ENCODE measurements at regions of chrX and their contacts with region 1.

Region 1: DNA sequence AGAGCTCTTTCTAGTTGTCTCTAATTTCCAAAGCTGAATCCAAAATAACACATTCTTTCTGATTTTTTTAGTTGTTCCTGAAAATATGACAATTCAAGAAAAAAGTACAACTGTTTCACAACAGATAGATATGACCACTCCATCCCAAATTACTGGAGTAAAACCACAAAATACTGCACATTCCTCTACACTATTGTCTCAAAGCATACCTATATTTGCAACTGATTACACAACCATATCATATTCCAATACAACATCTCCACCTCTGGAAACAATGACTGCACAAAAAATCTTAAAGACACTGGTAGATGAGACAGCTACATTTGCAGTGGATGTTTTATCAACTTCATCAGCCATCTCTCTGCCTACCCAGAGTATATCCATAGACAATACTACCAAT is 43.6 kb downstream of the ADGRG4 start:
- DNase-seq: peak in 1 of 2 experiments; percentile 78
- H3K4me3 ChIP-seq: no peak overlapping the region
- H3K27ac ChIP-seq: peak overlapping the region; percentile 25
- H3K4me1 ChIP-seq: peaks cover 21% of the 10 kb centered on the region
- H3K27me3 ChIP-seq: no peaks in the 10 kb centered on the region
- CTCF ChIP-seq: no peak

Region 2: DNA sequence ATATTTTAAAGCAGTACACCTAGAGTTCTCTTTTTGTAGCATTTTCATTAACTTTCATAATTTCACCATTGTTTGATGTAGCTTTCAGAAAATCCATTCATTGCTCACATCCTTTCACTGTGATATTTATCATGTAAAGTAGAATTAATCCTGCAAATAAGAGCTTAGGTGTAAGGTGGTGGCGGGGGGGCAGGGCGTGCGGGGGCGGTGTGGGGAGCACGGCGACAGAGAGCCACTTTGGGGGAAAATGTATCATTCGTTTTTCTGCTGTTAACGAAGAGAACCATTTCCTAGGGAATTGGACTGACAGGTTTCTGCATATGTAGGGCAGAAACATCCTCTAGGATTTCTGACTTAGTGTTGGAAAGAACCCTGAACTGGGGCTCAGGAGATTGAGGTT is 60.8 kb after region 1 on chrX:
- CTCF ChIA-PET with region 1: no interaction called
- POLR2A ChIA-PET with region 1: interaction called, 20 read pairs
- intact Hi-C with region 1: no loop called
- DNase-seq: no peak
- H3K4me3 ChIP-seq: no peak overlapping the region
- H3K27ac ChIP-seq: no peak overlapping the region
- H3K4me1 ChIP-seq: no peaks in the 10 kb centered on the region
- H3K27me3 ChIP-seq: no peaks in the 10 kb centered on the region
- CTCF ChIP-seq: no peak

Region 3: DNA sequence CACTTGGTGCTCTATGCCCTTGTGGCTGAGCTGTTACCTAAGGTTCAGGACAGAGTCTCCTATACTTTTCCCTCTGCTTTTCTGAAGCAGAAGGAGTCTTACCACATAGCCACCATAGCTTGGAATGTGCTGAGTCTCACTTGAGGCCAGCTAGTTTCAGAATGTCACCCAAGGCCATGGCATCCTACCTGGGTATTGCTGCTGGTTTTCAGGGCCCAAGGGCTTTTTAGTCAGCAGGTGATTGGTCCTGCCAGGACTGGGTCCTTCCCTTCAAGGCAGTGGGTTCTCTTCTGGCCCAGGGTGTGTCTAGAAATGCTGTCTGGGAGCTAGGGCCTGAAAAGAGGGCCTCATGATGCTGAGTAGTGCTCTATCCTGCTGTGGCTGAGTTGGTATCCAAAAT is 220.4 kb after region 1 on chrX:
- CTCF ChIA-PET with region 1: no interaction called
- POLR2A ChIA-PET with region 1: interaction called, 12 read pairs
- intact Hi-C with region 1: no loop called
- DNase-seq: no peak
- H3K4me3 ChIP-seq: no peak overlapping the region
- H3K27ac ChIP-seq: no peak overlapping the region
- H3K4me1 ChIP-seq: peaks cover 14% of the 10 kb centered on the region; the same call in 1 of the 2 replicates
- H3K27me3 ChIP-seq: no peaks in the 10 kb centered on the region
- CTCF ChIP-seq: no peak